ENCODE measurements at regions of chr13 and their contacts with region 1.

Region 1: DNA sequence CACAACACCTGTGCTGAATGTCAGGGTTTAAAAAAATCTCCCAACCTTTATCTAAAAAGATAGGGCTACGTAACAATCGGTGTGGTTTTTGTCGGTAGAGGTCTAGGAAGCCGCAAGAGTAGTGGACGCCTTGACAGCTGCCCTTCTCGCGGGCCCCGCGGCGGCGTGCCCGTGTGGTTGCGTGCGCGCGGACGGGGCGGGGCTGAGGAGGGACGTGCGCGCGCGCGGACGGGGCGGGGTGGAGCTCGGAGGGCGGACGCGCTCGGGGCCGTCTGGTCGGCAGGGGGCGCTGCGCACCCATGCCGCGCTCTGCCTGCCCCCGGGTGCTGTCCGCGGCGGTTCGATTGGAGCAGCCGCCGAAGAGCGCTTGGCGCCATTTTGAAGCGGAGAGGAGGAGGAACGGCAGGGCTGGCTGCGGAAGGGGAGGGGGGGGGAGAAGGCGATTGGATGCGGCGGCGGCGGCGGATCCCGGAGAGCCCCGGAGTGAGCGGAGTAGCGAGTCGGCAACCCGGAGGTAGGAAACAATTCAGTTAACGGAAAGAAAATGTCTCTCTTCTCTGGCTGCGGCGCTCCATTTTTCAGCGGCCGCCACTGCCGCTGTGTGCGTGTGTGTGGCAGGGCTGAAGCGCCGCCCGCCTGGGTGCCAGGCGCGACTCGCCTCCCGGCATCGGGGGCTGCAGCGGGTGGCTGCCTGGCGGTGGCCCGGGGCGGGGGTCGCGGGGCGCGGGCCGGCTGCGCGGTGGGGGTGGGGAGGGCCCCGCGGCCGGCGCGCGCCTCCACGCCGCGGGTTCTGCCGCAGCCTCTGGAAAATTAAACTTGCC is at the start of gene PDS5B:
- DNase-seq: peak; percentile 94 to 97 (median 96)
- H3K4me3 ChIP-seq: peak within 1 kb of the TSS; percentile 89
- H3K4me3 Mint-ChIP-seq: peak within 1 kb of the TSS; percentile 95 to 99 (median 97)
- H3K27ac ChIP-seq: peak within 1 kb of the TSS; percentile 60
- H3K27ac Mint-ChIP-seq: peak within 1 kb of the TSS; percentile 95 to 97 (median 96)
- H3K4me1 ChIP-seq: peaks cover 18% of the 10 kb centered on the region
- H3K4me1 Mint-ChIP-seq: peaks cover 38 to 48% (median 46%) of the 10 kb centered on the region in 3 donors
- H3K27me3 ChIP-seq: no peaks in the 10 kb centered on the region
- H3K27me3 Mint-ChIP-seq: peaks cover 1 to 4% of the 10 kb centered on the region in 2 donors
- total RNA-seq, gene PDS5B: 45.4 to 55.1 TPM

Region 2: DNA sequence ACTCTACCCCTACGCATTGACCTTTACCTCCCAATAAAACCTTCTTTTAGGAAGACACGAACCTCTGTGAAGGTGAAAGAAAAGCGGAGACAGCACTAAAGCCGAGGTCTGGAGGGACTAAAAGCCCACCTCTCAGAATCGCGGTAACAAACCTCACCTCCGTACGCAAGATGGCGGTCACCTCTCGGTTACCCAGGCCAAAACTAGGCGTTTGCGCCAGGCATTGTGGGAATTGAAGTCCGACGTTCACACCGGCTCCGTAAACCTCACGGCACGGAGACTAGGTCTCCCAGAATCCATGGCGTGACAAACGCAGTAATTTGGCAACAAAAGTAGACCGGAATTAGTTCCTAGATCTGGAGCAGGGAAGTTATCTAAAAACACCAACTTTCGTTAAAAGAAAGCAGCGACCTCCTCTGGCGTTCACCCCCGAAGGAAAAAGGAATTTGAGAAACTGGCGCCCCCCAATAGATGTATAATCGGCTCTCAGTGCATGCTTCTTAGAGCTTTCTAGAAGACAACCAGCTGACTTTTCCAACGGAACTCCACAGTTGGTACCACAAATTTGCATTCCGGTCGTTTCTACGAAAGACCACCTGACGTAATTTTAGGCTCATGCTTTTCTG is 47.6 kb before region 1 on chr13 and contains the start of gene N4BP2L2:
- CTCF ChIA-PET with region 1: interaction called, 6 read pairs
- POLR2A ChIA-PET with region 1: interaction called, 11 read pairs
- DNase-seq: peak; percentile 82 to 94 (median 89)
- H3K4me3 ChIP-seq: peak within 1 kb of the TSS; percentile 99
- H3K4me3 Mint-ChIP-seq: peak within 1 kb of the TSS; percentile 97 to 100 (median 99)
- H3K27ac ChIP-seq: peak within 1 kb of the TSS; percentile 96
- H3K27ac Mint-ChIP-seq: peak within 1 kb of the TSS; percentile 99 to 100 (median 100)
- H3K4me1 ChIP-seq: peaks cover 43% of the 10 kb centered on the region
- H3K4me1 Mint-ChIP-seq: peaks cover 46 to 52% (median 51%) of the 10 kb centered on the region in 3 donors
- H3K27me3 ChIP-seq: no peaks in the 10 kb centered on the region
- H3K27me3 Mint-ChIP-seq: peaks cover 0 to 3% of the 10 kb centered on the region in 2 donors
- total RNA-seq, gene N4BP2L2: 77.7 to 78.3 TPM

Region 3: DNA sequence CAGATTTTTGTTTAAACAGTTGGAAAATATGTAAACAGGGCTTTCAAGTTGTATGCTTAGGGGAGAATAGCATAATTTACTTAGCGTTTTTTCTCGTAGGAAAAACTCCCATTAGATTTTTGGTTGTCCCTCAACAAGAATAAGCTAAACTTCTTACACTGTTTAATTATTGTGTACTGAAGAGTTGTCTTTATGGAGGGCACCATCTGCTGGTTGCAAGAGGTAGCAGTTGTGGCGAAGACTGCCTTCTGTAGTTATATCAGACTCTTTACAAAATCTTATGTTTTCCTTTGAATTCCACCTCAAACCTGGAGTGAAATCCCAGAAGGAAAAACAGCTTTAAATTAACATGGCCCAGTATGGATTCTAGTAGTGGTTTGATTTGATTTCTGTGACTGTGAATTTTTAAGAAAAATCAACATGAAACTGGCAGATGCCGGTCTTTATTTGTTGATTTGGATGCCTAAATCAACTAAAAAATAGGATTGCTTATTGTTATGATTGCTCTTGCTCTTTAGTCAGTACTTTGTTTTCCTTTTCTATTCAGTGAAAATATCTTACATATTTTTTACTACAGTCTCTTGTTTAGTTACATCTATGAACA is 53.3 kb after region 1 on chr13:
- CTCF ChIA-PET with region 1: interaction called, 40 read pairs
- POLR2A ChIA-PET with region 1: interaction called, 4 read pairs
- DNase-seq: peak; percentile 19 to 72 (median 44)
- H3K4me3 ChIP-seq: no peak overlapping the region
- H3K4me3 Mint-ChIP-seq: no peak overlapping the region
- H3K27ac ChIP-seq: no peak overlapping the region
- H3K27ac Mint-ChIP-seq: no peak overlapping the region
- H3K4me1 ChIP-seq: peaks cover 14% of the 10 kb centered on the region
- H3K4me1 Mint-ChIP-seq: peaks cover 22 to 38% (median 37%) of the 10 kb centered on the region in 3 donors
- H3K27me3 ChIP-seq: no peaks in the 10 kb centered on the region
- H3K27me3 Mint-ChIP-seq: no peaks in the 10 kb centered on the region

Region 4: GRCh38 chr13:32650705-32651311 is 64.5 kb after region 1 on chr13:
- CTCF ChIA-PET with region 1: interaction called, 26 read pairs
- POLR2A ChIA-PET with region 1: interaction called, 4 read pairs
- DNase-seq: peak; percentile 28 to 68 (median 36)
- H3K4me3 ChIP-seq: no peak overlapping the region
- H3K4me3 Mint-ChIP-seq: no peak overlapping the region
- H3K27ac ChIP-seq: no peak overlapping the region
- H3K27ac Mint-ChIP-seq: peak overlapping the region in 1 of 8 donors; percentile 81
- H3K4me1 ChIP-seq: no peaks in the 10 kb centered on the region
- H3K4me1 Mint-ChIP-seq: peaks cover 37 to 61% (median 53%) of the 10 kb centered on the region in 3 donors
- H3K27me3 ChIP-seq: no peaks in the 10 kb centered on the region
- H3K27me3 Mint-ChIP-seq: no peaks in the 10 kb centered on the region

Region 5: GRCh38 chr13:32669030-32669646 is 82.8 kb after region 1 on chr13:
- CTCF ChIA-PET with region 1: interaction called, 21 read pairs
- POLR2A ChIA-PET with region 1: interaction called, 3 read pairs
- DNase-seq: peak in 2 of 5 donors; percentile 26 to 35
- H3K4me3 ChIP-seq: no peak overlapping the region
- H3K4me3 Mint-ChIP-seq: no peak overlapping the region
- H3K27ac ChIP-seq: no peak overlapping the region
- H3K27ac Mint-ChIP-seq: peak overlapping the region in 2 of 8 donors; percentile 14 to 38
- H3K4me1 ChIP-seq: no peaks in the 10 kb centered on the region
- H3K4me1 Mint-ChIP-seq: peaks cover 0 to 4% (median 3%) of the 10 kb centered on the region in 3 donors
- H3K27me3 ChIP-seq: no peaks in the 10 kb centered on the region
- H3K27me3 Mint-ChIP-seq: no peaks in the 10 kb centered on the region

Region 6: GRCh38 chr13:33542283-33543088 is 956.2 kb after region 1 on chr13:
- CTCF ChIA-PET with region 1: interaction called, 10 read pairs
- POLR2A ChIA-PET with region 1: interaction called, 6 read pairs
- DNase-seq: peak; percentile 98 to 100 (median 99)
- H3K4me3 ChIP-seq: peak overlapping the region; percentile 91
- H3K4me3 Mint-ChIP-seq: peak overlapping the region; percentile 92 to 98 (median 94)
- H3K27ac ChIP-seq: peak overlapping the region; percentile 99
- H3K27ac Mint-ChIP-seq: peak overlapping the region; percentile 98 to 100 (median 100)
- H3K4me1 ChIP-seq: peaks cover 38% of the 10 kb centered on the region
- H3K4me1 Mint-ChIP-seq: peaks cover 45 to 56% (median 48%) of the 10 kb centered on the region in 3 donors
- H3K27me3 ChIP-seq: no peaks in the 10 kb centered on the region
- H3K27me3 Mint-ChIP-seq: peaks cover 0 to 2% of the 10 kb centered on the region in 2 donors

Measured in CD8-positive, alpha-beta memory T cell (primary cell).